Activated T-helper 1 cell treated with anti-CD3 and anti-CD28 coated beads, Interleukin-12 subunit alpha, Interleukin-12 subunit beta, Interleukin-2, Interleukin-4 antibody, amounts not matched to agents 30 ng/mL and 10 ng/mL and 1 ng/mL, durations not matched to agents 14 hours and 24 hours and 36 hours (primary cell): ENCODE measurements at regions of chr2 and their contacts with region 1.

Region 1: DNA sequence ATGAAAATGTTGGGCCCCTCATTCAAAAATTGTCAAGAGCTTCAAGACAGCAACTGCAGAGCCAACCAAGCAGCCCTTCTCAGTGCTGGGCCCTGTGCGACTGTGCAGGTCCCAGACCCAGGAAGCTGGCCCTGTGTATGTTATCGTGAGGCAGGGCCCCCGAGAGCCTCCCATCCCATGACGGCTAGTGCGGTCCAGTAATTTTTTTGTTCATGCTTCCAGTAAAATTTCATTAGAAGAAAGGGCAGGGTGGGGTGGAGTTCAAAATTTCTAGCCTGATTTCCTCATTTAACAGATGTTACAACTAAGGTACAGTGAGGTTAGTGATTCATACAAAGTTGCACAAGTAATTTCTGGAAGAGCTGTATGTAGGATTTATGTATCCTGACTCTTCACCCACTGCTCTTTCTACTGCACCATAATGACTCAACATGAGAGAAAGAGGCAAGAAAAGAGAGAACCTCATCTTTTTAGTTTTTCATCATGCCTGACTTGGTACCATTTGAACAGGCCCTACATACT is 105.5 kb downstream of the ZEB2 start:
- DNase-seq: no peak
- H3K4me3 Mint-ChIP-seq: no peak overlapping the region
- H3K27ac Mint-ChIP-seq: peak overlapping the region; percentile 55
- H3K4me1 Mint-ChIP-seq: peaks cover 29% of the 10 kb centered on the region
- H3K27me3 Mint-ChIP-seq: no peaks in the 10 kb centered on the region

Region 2: GRCh38 chr2:143696651-143697050 is 717.7 kb before region 1 on chr2:
- intact Hi-C with region 1: loop called (anchors 1 kb)
- DNase-seq: no peak
- H3K4me3 Mint-ChIP-seq: no peak overlapping the region
- H3K27ac Mint-ChIP-seq: no peak overlapping the region
- H3K4me1 Mint-ChIP-seq: peaks cover 27% of the 10 kb centered on the region
- H3K27me3 Mint-ChIP-seq: no peaks in the 10 kb centered on the region

Region 3: DNA sequence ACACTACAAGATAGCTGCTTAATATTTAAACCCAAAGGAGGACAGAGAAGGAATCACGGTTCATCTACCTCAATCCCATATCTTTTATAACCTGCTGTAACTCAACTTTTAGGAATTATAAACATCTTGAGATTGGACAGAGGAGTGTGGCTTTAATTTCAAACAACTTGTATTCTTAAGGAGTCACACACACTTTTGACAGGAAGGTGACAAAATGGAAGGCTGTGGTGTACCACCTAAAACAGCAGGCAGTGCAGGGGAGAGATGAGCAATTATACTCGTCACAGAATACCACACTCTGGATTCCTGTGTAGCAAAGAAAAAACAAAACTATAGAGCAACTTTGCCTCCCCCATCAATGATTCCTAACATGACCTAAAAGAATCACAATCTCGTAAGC is 89.3 kb before region 1 on chr2:
- intact Hi-C with region 1: loop called (anchors 1 kb)
- DNase-seq: peak; percentile 55
- H3K4me3 Mint-ChIP-seq: peak overlapping the region; percentile 72
- H3K27ac Mint-ChIP-seq: peak overlapping the region; percentile 97
- H3K4me1 Mint-ChIP-seq: peaks cover 81% of the 10 kb centered on the region
- H3K27me3 Mint-ChIP-seq: no peaks in the 10 kb centered on the region

Region 4: GRCh38 chr2:144357623-144358373 is 56.6 kb before region 1 on chr2:
- intact Hi-C with region 1: loop called (anchors 1 kb)
- DNase-seq: peak; percentile 13
- H3K4me3 Mint-ChIP-seq: no peak overlapping the region
- H3K27ac Mint-ChIP-seq: peak overlapping the region; percentile 71
- H3K4me1 Mint-ChIP-seq: peaks cover 30% of the 10 kb centered on the region
- H3K27me3 Mint-ChIP-seq: no peaks in the 10 kb centered on the region

Region 5: DNA sequence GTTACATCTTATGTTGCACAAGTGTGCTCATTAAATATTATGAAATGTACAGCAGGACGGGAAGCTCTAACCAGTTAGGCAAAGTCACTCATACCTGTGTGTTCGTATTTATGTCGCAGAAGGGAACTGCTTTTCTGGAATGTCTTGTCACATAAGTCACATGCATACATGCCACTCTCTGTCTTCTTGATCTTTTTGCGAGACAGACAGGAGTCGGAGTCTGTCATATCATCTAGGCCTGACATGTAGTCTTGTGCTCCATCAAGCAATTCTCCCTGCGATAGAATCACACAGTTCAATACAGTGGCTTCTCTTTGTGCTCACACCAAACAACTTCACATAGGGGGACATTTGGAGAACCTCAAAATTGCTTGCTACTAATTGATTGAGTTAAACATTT is 18.1 kb before region 1 on chr2:
- intact Hi-C with region 1: no loop called
- DNase-seq: no peak
- H3K4me3 Mint-ChIP-seq: no peak overlapping the region
- H3K27ac Mint-ChIP-seq: no peak overlapping the region
- H3K4me1 Mint-ChIP-seq: no peaks in the 10 kb centered on the region
- H3K27me3 Mint-ChIP-seq: no peaks in the 10 kb centered on the region

Region 6: GRCh38 chr2:144424559-144425240 is 10.3 kb after region 1 on chr2:
- intact Hi-C with region 1: loop called (anchors 1 kb)
- DNase-seq: no peak
- H3K4me3 Mint-ChIP-seq: no peak overlapping the region
- H3K27ac Mint-ChIP-seq: peak overlapping the region; percentile 19
- H3K4me1 Mint-ChIP-seq: peaks cover 7% of the 10 kb centered on the region
- H3K27me3 Mint-ChIP-seq: no peaks in the 10 kb centered on the region

Region 7: DNA sequence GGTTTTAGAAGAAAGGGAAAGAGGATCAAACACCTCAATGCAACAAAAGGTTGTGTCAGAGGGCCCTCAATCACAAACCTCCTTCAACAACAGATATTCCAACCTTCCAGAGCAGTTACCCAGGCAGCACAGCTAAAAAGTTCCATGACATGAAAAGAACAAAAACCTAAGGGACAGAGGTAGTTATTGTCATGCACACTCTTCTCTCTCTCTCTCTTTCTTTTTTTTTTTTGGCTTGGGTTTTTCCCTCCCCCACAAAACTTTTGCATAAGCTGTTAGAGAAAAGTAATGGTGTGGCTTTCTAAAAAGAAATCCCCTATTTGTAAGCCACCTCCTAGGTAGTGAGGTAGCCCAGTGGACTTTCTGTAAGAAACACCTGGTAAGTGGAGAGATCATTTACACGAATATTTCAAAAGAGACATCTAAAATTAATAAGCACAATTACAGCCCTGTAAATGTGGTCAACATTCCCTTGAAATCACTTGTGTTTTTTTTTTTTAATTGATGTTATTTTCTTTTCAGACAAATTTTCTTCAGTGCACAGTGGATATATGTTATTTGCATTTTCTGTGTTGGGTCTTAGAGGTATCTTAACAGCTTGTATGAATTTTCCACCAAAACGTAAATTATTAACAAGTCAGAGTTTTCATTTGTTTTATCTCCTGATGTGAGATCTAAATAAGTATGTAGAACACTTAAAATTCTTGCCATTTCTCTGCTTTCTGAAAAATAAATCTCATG is 57.1 kb after region 1 on chr2:
- intact Hi-C with region 1: loop called (anchors 1 kb)
- DNase-seq: no peak
- H3K4me3 Mint-ChIP-seq: no peak overlapping the region
- H3K27ac Mint-ChIP-seq: peak overlapping the region; percentile 15
- H3K4me1 Mint-ChIP-seq: peaks cover 20% of the 10 kb centered on the region
- H3K27me3 Mint-ChIP-seq: no peaks in the 10 kb centered on the region